RWPE1 (cell line): ENCODE measurements at regions of chr20 and their contacts with region 1.

Region 1: DNA sequence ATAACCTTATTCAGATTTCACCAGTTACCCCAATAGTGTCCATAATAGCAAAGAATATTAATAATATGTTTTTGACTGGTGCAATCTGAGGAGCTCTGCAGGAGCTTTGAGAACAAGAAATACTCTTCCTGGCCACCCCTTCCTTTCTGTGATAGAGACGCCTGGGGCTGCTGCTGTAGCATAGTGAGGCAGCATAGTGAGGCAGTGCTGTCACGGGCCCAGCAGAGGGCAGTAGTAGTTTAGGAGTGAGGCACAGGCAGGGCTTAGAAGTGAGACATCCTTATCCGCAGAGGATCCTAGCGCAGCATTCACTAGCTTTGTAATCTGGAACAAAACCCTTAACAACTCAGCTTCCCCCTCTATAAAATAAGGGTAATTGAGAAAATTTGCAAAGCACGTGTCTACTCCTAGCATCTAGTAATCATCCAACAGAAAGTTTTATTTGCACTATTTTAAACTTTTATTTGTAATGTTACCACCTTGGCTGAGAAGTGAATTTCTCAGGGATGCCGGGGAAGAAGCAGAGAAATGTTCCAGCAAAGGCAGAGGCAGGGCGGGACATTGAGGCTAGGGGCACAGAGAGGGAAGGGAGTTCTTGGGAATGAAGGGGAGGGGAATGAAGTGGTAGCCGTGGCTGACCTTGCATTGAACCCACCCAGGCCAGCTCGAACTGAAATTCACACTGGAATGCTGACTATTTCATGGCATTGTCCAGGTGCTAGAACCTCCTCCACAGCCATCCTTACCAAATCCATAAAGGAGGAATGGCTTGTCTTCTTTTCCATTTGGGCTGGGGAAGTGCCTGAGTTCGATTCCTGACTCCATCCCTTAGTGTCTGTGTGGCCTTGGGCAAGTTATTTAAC is 78.8 kb downstream of the CDS2 start:
- DNase-seq: peak; percentile 83
- H3K27ac ChIP-seq: no peak overlapping the region
- CTCF ChIP-seq: peak; percentile 97

Region 2: DNA sequence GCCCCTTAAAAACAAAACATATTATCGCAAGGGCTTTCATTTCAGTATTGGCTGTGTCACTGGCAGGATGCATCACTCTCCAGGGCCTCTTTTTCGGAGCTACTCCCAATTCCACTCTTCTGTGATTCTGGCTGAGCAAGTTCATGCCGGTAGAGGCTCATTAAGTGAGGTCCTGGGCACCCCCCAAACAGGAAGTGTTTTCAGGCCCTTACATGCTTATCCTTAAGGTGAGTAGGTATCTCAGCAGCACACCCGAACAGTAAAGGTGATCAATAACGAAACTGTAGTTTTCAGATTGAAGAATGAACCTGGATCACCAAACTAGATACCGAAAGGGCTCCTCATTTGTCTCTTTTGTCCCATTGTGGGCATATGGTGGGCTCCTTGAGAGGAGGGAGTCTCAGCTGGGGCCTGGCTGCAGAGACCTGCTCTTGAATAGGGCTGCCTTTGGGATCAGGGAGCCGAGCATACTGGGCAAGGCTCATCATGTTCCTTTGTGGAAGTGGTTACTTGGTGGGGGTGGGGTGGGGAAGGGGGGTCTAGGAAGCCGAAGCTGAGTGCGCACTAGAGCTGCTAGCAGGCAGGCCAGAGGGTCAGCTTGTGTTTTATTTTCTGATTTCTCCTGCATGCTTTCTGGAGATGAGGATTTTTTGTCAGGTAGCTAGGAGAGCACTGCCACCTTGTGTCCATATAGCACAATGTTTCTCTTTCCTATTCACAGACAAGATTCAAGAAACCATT is 13.6 kb before region 1 on chr20:
- CTCF ChIA-PET with region 1: interaction called, 16 read pairs
- POLR2A ChIA-PET with region 1: no interaction called
- DNase-seq: peak; percentile 79
- H3K27ac ChIP-seq: peak overlapping the region; percentile 83
- CTCF ChIP-seq: peak; percentile 89

Region 3: DNA sequence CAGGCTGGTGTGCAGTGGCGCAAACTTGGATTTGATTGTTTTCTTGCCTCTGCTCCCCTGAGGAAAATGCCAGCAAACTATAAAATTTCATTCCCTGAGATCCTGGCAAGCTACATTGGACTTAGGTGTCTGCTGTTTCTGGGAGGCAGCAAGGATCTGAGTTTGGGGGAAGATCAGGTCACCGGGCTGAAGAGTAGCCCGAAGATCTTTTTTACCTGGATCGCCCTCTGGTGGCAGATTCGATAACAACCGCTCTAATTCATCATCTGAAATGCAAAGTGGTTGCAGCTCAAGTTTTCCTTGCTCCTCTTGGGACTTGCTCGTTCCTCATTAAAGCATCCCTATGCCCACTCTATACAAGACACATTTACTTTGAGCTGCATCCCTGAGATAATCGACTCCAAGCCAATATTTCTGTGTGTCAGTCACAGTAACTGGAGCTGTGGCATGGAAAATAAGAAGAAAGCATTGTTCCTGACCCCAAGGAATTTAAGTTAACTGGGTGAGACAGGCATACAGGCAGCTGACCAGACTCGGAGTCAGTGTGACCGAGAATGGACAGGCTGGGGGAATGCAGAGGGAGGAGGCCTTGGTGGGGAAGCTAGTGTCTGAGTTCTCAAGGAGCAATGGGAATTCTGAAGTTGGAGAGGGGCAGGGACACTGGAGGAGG is 243.0 kb after region 1 on chr20:
- CTCF ChIA-PET with region 1: interaction called, 37 read pairs
- POLR2A ChIA-PET with region 1: interaction called, 4 read pairs
- DNase-seq: peak; percentile 68
- H3K27ac ChIP-seq: no peak overlapping the region
- CTCF ChIP-seq: peak; percentile 88